HEK293 (cell line): ENCODE measurements at regions of chr5 and their contacts with region 1.

Region 1: GRCh38 chr5:180470966-180471582 is 23.1 kb upstream of the CNOT6 start:
- H3K4me3 ChIP-seq: no peak overlapping the region
- H3K27ac ChIP-seq: no peak overlapping the region
- H3K4me1 ChIP-seq: no peaks in the 10 kb centered on the region
- CTCF ChIP-seq: peak; percentile 70

Region 2: DNA sequence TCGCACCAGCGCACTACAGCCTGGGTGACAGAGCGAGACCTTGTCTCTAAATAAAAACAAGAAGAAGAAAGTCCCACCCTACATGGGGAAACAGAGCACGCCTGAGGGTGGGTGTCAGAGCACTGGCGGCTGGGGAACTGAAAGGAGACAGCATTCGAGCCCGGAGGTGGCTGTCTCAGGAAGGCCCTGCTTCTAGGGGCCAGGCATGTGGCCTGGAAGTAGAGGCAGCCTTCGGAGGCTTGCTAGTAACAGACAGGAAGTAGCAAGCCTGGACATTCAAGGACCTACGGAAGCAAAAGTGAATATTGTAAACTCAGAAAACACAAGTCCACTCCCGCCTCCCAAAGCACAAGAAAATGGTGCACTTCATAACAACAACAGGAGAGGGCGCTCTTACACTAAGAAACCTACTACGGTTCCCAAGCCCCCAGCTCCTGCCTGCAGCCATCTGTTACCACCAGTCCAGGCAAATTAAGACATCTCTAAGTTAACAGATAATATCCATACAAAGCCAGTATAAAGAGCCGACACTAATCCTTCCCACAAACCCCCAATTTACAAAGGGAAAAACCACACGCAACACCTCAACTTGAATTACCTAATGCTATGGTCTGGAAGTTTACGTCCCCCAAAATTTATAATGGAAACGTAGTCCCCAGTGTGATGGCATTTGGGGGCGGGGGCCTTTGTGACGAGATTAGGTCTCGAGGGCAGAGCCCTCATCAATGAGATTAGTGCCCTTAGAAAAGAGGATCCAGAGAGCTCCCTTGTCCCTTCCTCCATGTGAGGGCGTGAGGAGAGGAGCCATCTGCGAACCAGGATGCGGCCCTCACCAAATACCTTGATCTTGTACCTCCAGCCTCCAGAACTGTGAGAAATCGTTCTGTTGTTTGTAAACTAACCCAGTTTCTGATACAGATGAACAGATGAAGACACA is 269.8 kb before region 1 on chr5:
- CTCF ChIA-PET with region 1: interaction called, 11 read pairs
- POLR2A ChIA-PET with region 1: no interaction called
- H3K4me3 ChIP-seq: no peak overlapping the region
- H3K27ac ChIP-seq: no peak overlapping the region
- H3K4me1 ChIP-seq: no peaks in the 10 kb centered on the region
- CTCF ChIP-seq: no peak

Region 3: DNA sequence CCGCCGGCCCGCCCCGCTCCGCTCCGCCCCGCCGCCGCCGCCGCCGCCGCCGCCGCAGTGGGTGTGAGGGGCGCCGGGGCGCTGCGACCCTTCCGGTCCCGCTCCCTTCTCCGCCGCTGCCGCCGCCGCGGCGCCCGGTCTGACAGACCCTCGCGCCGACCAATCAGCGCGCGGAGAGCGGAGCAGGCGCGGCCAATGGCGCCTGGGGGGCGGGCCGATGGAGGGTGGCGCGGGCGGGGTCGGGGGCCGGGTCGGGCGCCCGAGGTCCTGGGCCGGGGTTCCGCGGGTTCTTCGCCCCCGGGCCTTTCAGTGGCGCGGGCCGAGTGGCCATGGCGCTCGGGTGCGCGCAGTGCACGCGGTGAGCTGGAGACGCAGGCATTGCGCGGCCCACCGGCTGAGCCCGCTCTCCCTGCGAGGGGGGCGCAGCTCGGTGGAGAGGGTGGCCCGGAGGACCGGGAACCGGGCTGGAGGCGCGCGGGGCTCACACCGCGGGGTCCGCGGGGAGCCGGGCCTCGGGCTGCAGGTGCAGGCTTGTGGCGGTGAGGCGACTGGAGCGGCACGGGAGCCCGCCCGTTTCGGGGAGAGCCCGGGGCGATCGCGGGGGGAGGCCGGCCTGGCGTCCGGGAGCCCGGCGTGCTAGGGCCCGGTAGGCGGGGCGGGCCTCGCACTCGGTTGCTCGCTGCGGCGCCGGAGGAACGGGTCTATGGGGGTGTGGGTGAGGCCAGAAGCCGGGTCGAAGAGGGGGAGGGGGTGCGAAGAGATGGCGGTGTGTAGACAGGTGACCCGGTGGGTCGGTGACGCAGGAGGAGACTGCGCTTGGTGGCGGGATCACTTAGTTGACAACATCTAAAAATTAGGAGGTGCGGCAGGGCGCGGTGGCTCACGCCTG is 178.9 kb before region 1 on chr5 and contains the start of gene MAPK9:
- CTCF ChIA-PET with region 1: interaction called, 47 read pairs
- POLR2A ChIA-PET with region 1: no interaction called
- H3K4me3 ChIP-seq: peak within 1 kb of the TSS; percentile 90
- H3K27ac ChIP-seq: peak within 1 kb of the TSS; percentile 89
- H3K4me1 ChIP-seq: 0 out of 2 replicates have a peak, but pooled peaks cover 3% of the 10 kb centered on the region
- CTCF ChIP-seq: no peak

Region 4: DNA sequence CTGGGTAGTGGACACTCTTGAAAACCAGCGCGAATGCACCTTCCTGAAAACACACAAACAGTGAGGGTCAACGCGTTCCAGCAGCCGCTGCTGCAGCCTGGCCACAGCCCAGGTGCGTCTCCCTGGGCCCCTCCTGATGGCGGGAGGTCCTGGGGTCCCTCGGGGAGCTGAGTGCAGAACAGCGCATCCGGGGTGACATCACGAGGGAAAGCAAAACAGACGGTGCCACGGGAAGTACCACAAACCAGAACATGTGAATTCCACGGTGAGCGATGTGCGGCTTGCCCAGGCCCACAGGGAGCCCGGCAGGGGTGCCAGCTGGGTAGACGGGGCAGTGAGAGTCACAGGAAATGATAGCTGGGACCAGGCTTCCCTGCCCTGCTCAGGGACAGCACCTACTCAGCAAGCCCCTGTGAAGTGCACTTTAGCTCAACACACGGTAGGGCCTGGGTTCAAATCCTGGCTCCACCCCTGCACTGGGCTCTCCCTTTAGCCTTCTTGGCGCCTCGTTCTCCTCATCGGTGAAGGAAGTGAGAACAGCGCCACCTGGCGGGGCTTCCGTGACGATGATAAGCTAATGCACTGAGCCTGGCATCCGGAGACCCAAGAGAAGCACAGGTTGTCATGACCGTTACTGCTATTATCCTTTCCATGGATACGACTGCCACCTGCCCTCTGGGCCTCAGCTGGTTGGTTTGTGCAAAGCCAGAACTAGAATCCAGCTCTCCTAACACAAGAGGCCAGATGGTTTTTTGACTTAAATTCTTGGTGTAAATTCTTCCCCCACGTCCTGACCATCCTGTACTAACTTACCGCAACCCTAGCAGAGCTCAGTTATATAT is 142.6 kb before region 1 on chr5:
- CTCF ChIA-PET with region 1: interaction called, 14 read pairs
- POLR2A ChIA-PET with region 1: no interaction called
- H3K4me3 ChIP-seq: no peak overlapping the region
- H3K27ac ChIP-seq: no peak overlapping the region
- H3K4me1 ChIP-seq: no peaks in the 10 kb centered on the region
- CTCF ChIP-seq: peak; percentile 74

Region 5: GRCh38 chr5:180455873-180456272 is 15.2 kb before region 1 on chr5:
- CTCF ChIA-PET with region 1: interaction called, 14 read pairs
- POLR2A ChIA-PET with region 1: no interaction called
- H3K4me3 ChIP-seq: no peak overlapping the region
- H3K27ac ChIP-seq: no peak overlapping the region
- H3K4me1 ChIP-seq: no peaks in the 10 kb centered on the region
- CTCF ChIP-seq: no peak

Region 6: DNA sequence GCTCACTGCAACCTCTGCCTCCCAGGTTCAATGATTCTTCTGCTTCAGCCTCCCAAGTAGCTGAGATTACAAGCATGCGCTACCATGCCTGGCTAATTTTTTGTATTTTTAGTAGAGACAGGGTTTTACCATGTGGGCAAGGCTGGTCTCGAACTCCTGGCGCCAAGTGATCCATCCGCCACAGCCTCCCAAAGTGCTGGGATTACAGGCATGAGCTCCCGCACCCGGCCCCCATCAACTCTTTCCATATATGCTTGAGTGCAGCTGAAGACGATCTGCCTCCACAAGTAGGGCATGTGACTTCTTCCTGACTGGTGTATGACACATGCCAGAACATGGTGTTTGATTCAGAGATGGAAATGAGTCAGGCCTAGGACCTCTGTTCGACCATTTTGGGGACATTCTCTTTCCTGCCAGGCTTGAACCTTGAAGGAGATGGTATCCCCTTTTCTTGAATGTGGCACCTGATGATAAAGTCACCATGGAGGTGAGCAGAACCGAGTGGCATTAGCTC is 15.6 kb after region 1 on chr5:
- CTCF ChIA-PET with region 1: interaction called, 10 read pairs
- POLR2A ChIA-PET with region 1: no interaction called
- H3K4me3 ChIP-seq: no peak overlapping the region
- H3K27ac ChIP-seq: no peak overlapping the region
- H3K4me1 ChIP-seq: no peaks in the 10 kb centered on the region; the same call in 1 of the 2 replicates
- CTCF ChIP-seq: no peak

Region 7: DNA sequence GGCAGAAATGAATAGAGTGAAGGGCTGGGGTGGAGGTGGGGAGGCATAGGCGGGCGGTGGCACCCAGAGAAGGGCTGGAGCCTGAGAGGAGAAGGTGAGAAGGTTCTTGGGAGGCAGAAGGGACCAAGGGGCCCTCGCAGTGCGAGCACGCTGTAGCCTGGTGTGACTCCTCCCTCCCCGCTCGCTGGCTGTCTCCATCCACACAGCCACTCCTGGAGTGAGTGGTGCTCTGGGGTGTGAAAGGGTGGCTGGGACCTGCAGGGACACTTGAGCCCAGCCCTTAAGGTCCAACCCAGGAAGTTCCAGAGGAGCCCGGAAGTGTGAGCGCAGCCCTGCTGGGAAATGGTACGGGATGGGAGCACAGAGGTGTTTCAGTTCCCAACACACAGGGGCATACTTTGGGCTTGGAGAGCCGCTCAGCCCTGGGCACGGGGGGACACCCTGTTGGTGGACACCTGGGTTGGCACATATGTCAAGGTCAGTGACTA is 129.5 kb after region 1 on chr5:
- CTCF ChIA-PET with region 1: no interaction called
- POLR2A ChIA-PET with region 1: no interaction called
- H3K4me3 ChIP-seq: no peak overlapping the region
- H3K27ac ChIP-seq: no peak overlapping the region
- H3K4me1 ChIP-seq: no peaks in the 10 kb centered on the region
- CTCF ChIP-seq: no peak